Heart right ventricle (tissue), 16 donors: ENCODE measurements at regions of chr14 and their contacts with region 1.

Region 1: GRCh38 chr14:93959239-93960107 is 16.9 kb downstream of the ASB2 start:
- DNase-seq: peak in 1 of 2 donors; percentile 49
- ATAC-seq: peak in 6 of 8 donors; percentile 24 to 72 (median 39)
- H3K4me3 ChIP-seq: no peak overlapping the region
- H3K27ac ChIP-seq: peak overlapping the region in 8 of 10 donors; percentile 30 to 91 (median 80)
- H3K4me1 ChIP-seq: peaks cover 9 to 96% (median 74%) of the 10 kb centered on the region in 9 donors
- H3K27me3 ChIP-seq: peaks cover 0 to 4% (median 0%) of the 10 kb centered on the region in 7 donors
- CTCF ChIP-seq: no peak

Region 2: GRCh38 chr14:93975791-93976476 is 16.5 kb after region 1 on chr14:
- intact Hi-C with region 1: loop called in 1 of 10 experiments (anchors 2 kb)
- DNase-seq: no peak
- ATAC-seq: peak; percentile 12 to 70 (median 48)
- H3K4me3 ChIP-seq: peak overlapping the region; percentile 25 to 57 (median 49)
- H3K27ac ChIP-seq: peak overlapping the region; percentile 74 to 93 (median 88)
- H3K4me1 ChIP-seq: peaks cover 6 to 87% (median 36%) of the 10 kb centered on the region in 9 donors
- H3K27me3 ChIP-seq: no peaks in the 10 kb centered on the region
- CTCF ChIP-seq: no peak

Region 3: DNA sequence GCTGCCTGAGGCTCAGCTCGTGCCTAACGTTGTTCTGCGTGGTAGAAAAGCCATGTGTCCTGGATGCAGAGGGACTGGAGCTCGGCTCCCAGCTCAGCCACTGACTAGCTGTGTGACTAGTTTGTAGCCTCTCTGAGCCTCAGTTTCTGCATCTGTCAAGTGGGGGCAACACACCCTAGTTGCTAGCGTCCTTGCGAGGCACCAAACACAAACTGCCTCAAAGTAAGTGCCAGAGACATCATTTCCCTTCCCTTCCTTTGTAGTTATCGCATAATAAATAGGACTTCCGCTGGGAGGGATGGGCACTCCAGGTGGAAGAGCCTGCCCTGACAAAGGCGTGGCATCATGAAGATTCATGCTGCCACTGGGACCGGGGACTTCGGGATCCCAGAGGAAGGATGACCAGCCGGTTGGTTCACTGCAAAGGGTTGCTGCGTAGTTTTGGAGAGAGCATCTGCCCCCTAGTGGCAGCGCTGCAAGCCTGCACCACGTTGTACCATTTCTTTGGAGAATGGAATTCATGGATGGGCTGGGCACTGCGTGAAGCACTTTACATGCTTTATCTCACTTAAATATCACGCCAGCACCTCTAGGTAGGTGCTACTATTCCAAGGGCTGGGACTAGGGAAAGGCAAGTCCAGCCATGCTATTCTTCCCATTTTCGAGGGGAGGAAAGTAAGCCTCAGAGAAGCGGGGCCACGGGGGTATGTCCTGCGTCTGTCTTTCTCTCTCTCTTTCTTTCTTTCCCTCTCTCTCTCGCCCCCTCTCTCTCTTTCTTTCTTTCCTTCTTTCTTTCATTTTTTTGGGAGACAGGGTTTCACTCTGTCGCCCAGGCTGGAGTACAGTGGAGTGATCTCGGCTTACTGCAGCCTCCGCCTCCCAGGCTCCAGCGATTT is 42.3 kb after region 1 on chr14:
- intact Hi-C with region 1: loop called in 1 of 10 experiments (anchors 5 kb)
- DNase-seq: peak; percentile 38 to 49
- ATAC-seq: peak; percentile 67 to 85 (median 80)
- H3K4me3 ChIP-seq: no peak overlapping the region
- H3K27ac ChIP-seq: no peak overlapping the region
- H3K4me1 ChIP-seq: peaks cover 3 to 31% (median 17%) of the 10 kb centered on the region in 9 donors
- H3K27me3 ChIP-seq: peaks cover 0 to 22% (median 0%) of the 10 kb centered on the region in 7 donors
- CTCF ChIP-seq: peak; percentile 91 to 98 (median 97)

Region 4: DNA sequence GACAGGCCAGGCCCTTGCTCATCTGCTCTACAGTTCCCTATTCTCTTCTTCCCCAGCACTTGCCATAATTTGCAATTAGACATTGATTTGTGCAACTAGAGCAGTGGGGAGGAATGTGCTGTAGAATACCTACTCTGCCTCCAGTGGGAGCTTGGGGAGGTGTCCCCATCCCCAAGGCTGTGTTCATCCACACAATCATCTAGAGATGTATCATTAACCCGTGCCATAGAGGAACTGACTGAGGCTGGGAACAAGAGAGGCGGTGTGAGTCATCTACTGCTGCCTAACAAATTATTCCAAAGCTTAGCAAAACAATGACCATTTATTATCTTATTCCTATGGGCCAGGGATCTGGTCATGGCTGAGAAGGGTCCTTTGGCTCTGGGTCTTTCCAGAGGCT is 61.5 kb after region 1 on chr14:
- intact Hi-C with region 1: no loop called
- DNase-seq: no peak
- ATAC-seq: no peak
- H3K4me3 ChIP-seq: no peak overlapping the region
- H3K27ac ChIP-seq: no peak overlapping the region
- H3K4me1 ChIP-seq: peaks cover 0 to 4% (median 0%) of the 10 kb centered on the region in 9 donors
- H3K27me3 ChIP-seq: peaks cover 0 to 4% (median 0%) of the 10 kb centered on the region in 7 donors
- CTCF ChIP-seq: no peak